ENCODE measurements at regions of chr3 and their contacts with region 1.

Region 1: GRCh38 chr3:37996785-37997301 is 6.3 kb downstream of the VILL start:
- DNase-seq: peak; percentile 85
- H3K4me3 Mint-ChIP-seq: no peak overlapping the region
- H3K27ac Mint-ChIP-seq: peak overlapping the region; percentile 22
- H3K4me1 Mint-ChIP-seq: peaks cover 29% of the 10 kb centered on the region
- H3K27me3 Mint-ChIP-seq: no peaks in the 10 kb centered on the region
- CTCF ChIP-seq: peak; percentile 82

Region 2: GRCh38 chr3:37979541-37980461 is 17.0 kb before region 1 on chr3:
- CTCF ChIA-PET with region 1: interaction called, 11 read pairs
- POLR2A ChIA-PET with region 1: no interaction called
- intact Hi-C with region 1: loop called (anchors 2 kb)
- DNase-seq: no peak
- H3K4me3 Mint-ChIP-seq: no peak overlapping the region
- H3K27ac Mint-ChIP-seq: no peak overlapping the region
- H3K4me1 Mint-ChIP-seq: no peaks in the 10 kb centered on the region
- H3K27me3 Mint-ChIP-seq: no peaks in the 10 kb centered on the region
- CTCF ChIP-seq: no peak

Region 3: GRCh38 chr3:37986479-37987314 is 10.1 kb before region 1 on chr3:
- CTCF ChIA-PET with region 1: interaction called, 11 read pairs
- POLR2A ChIA-PET with region 1: interaction called, 3 read pairs
- intact Hi-C with region 1: no loop called
- DNase-seq: peak; percentile 50
- H3K4me3 Mint-ChIP-seq: no peak overlapping the region
- H3K27ac Mint-ChIP-seq: no peak overlapping the region
- H3K4me1 Mint-ChIP-seq: no peaks in the 10 kb centered on the region
- H3K27me3 Mint-ChIP-seq: no peaks in the 10 kb centered on the region
- CTCF ChIP-seq: no peak